Natural killer cell (primary cell): ENCODE measurements at regions of chr1 and their contacts with region 1.

Region 1: DNA sequence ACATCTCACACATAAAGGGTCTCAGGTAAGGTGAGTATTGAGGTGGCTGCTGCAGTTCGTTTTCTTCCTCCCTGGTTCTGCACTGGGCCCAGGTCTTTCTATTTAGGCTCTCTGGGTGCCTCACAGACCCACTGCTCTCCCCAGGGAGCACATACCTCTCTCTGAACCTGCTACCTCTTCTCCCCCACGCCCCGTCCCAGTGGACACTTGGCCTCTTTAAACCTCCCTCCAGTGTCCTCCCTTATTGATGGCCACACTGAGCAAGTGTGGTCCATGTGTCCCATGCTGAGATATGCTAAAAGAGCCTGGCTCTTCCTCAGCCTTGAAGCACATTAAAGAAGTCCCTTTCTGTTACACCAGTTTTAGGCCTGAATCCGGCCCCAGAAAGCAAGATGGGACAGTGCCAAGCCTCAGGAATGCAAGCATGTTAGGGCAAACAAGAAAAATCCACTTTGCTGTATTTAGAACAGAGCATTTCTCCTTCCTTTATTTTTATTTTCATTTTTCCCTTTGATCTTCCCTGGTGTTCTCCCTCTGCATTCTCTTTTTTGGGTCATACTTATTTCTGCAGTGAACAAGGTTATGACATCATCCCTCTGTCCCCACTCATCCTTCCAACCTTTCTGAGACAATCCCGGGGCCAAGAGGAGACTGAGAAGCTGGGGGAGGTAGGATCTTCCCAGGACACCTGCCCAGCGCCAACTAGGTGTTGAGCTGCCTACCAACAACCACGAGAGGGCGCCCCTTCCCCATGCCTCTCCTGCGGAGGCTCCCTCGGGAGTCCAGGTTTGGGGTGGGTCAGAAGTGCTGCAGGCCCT is 5.0 kb upstream of the CHI3L2 start:
- DNase-seq: peak; percentile 76 to 90
- ATAC-seq: peak; percentile 29 to 67 (median 60)
- H3K4me3 ChIP-seq: peak overlapping the region; percentile 0
- H3K4me3 Mint-ChIP-seq: peak overlapping the region; percentile 86
- H3K27ac ChIP-seq: peak overlapping the region; percentile 80
- H3K27ac Mint-ChIP-seq: peak overlapping the region; percentile 94 to 95
- H3K4me1 ChIP-seq: peaks cover 87% of the 10 kb centered on the region
- H3K4me1 Mint-ChIP-seq: peaks cover 90 to 93% of the 10 kb centered on the region in 2 donors
- H3K27me3 ChIP-seq: no peaks in the 10 kb centered on the region
- H3K27me3 Mint-ChIP-seq: no peaks in the 10 kb centered on the region
- CTCF ChIP-seq: peak; percentile 89

Region 2: DNA sequence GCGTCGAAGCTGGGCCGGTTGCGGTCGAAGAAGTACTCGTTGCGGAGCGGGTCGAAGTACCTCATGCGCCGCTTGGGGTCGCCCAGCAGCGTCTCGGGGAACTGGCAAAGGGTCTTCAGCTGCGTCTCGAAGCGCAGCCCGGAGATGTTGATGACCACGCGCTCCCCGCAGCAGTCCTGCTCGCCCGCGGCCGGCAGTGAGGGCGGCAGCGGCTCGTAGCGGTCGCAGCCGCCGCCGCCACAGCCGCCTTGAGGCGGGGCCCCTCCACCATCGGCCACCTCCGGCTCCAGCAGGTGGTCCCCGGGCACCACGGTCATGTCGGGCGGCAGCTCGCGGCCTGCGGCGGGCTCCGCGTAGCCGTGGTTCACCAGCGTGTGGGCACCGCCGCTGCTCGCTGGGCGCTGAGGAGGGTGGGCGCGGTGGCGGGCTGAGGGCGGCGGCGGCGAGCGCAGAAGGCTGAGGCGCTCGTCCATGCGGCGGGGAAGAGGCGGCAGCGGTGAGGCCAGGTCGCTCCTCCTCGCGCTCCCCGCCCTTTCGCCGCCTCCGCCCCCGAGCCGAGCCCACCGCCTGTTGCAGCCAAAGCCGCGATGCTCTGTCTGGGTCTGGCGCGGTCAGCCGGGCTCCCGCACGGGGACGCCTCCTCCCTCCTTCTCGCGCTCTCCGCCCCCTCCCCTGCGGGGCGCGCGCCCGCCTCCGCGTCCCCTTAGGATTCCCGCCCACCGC is 548.0 kb before region 1 on chr1 and contains the start of gene KCNA3:
- intact Hi-C with region 1: loop called (anchors 10 kb)
- DNase-seq: peak; percentile 72 to 82
- ATAC-seq: peak; percentile 59 to 74 (median 72)
- H3K4me3 ChIP-seq: peak within 1 kb of the TSS; percentile 68
- H3K4me3 Mint-ChIP-seq: peak within 1 kb of the TSS; percentile 98
- H3K27ac ChIP-seq: peak within 1 kb of the TSS; percentile 93
- H3K27ac Mint-ChIP-seq: peak within 1 kb of the TSS; percentile 88 to 98
- H3K4me1 ChIP-seq: peaks cover 26% of the 10 kb centered on the region
- H3K4me1 Mint-ChIP-seq: peaks cover 42 to 43% of the 10 kb centered on the region in 2 donors
- H3K27me3 ChIP-seq: no peaks in the 10 kb centered on the region
- H3K27me3 Mint-ChIP-seq: no peaks in the 10 kb centered on the region
- CTCF ChIP-seq: no peak
- total RNA-seq, gene KCNA3: 19.7 to 36.2 (median 30.3) TPM

Region 3: GRCh38 chr1:110879758-110880606 is 342.5 kb before region 1 on chr1:
- intact Hi-C with region 1: loop called (anchors 5 kb)
- DNase-seq: peak; percentile 42 to 78
- ATAC-seq: peak; percentile 60 to 79 (median 67)
- H3K4me3 ChIP-seq: peak overlapping the region; percentile 8
- H3K4me3 Mint-ChIP-seq: peak overlapping the region; percentile 99
- H3K27ac ChIP-seq: peak overlapping the region; percentile 86
- H3K27ac Mint-ChIP-seq: peak overlapping the region; percentile 92 to 99
- H3K4me1 ChIP-seq: peaks cover 35% of the 10 kb centered on the region
- H3K4me1 Mint-ChIP-seq: peaks cover 75 to 99% of the 10 kb centered on the region in 2 donors
- H3K27me3 ChIP-seq: no peaks in the 10 kb centered on the region
- H3K27me3 Mint-ChIP-seq: no peaks in the 10 kb centered on the region
- CTCF ChIP-seq: no peak

Region 4: DNA sequence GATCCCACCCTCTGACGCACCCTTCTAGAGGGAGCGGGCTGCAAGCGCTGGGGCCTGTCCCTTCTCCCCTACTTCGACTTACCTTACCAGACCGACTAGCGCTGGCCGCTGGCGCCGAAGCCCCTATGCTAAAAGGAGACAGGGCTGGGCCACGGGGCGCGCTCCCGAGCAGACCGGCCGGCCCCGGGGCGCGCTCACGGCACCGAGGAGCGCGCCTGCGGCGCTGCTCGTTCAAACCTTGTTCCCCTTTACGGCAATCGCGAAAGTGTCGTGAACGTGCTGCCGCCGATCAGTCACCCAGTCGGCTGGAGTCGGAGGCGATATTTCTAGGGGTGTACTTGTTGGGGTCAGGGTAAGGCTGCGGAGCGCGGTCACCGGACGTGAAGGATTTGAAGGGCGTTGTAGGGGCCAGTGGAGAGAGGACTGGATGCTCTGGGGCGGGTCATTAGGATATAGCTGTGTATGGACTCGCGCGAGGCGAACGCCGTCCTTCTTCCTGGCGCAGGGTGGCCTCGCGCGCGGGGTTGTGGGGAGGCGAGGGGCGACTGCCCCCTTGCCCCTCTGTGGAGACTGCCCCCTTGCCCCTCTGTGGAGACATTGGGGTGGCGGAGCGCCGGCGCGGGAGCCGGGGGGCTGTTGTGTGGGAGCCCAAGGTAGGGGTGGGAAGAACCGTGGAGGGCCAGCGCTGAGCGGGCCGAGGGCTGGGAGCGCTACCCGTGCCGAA is 82.4 kb before region 1 on chr1 and contains the starts of genes CEPT1 and DRAM2:
- intact Hi-C with region 1: loop called (anchors 5 kb)
- DNase-seq: peak; percentile 91 to 95
- ATAC-seq: peak; percentile 79 to 96 (median 82)
- H3K4me3 ChIP-seq: peak within 1 kb of the TSS; percentile 88
- H3K4me3 Mint-ChIP-seq: peak within 1 kb of the TSS; percentile 99
- H3K27ac ChIP-seq: peak within 1 kb of the TSS; percentile 96
- H3K27ac Mint-ChIP-seq: peak within 1 kb of the TSS; percentile 91 to 98
- H3K4me1 ChIP-seq: no peaks in the 10 kb centered on the region
- H3K4me1 Mint-ChIP-seq: peaks cover 40 to 48% of the 10 kb centered on the region in 2 donors
- H3K27me3 ChIP-seq: no peaks in the 10 kb centered on the region
- H3K27me3 Mint-ChIP-seq: no peaks in the 10 kb centered on the region
- CTCF ChIP-seq: no peak
- total RNA-seq, gene CEPT1: 35.4 to 49.5 (median 40.9) TPM
- total RNA-seq, gene DRAM2: 35.8 to 40.8 (median 36.4) TPM

Region 5: GRCh38 chr1:111275079-111275478 is 52.6 kb after region 1 on chr1:
- intact Hi-C with region 1: no loop called
- DNase-seq: peak in 1 of 2 donors; percentile 13
- ATAC-seq: peak in 1 of 3 donors; percentile 39
- H3K4me3 ChIP-seq: no peak overlapping the region
- H3K4me3 Mint-ChIP-seq: no peak overlapping the region
- H3K27ac ChIP-seq: no peak overlapping the region
- H3K27ac Mint-ChIP-seq: no peak overlapping the region
- H3K4me1 ChIP-seq: peaks cover 17% of the 10 kb centered on the region
- H3K4me1 Mint-ChIP-seq: peaks cover 17 to 21% of the 10 kb centered on the region in 2 donors
- H3K27me3 ChIP-seq: peaks cover 21% of the 10 kb centered on the region
- H3K27me3 Mint-ChIP-seq: peaks cover 44% of the 10 kb centered on the region in 2 donors
- CTCF ChIP-seq: no peak

Region 6: DNA sequence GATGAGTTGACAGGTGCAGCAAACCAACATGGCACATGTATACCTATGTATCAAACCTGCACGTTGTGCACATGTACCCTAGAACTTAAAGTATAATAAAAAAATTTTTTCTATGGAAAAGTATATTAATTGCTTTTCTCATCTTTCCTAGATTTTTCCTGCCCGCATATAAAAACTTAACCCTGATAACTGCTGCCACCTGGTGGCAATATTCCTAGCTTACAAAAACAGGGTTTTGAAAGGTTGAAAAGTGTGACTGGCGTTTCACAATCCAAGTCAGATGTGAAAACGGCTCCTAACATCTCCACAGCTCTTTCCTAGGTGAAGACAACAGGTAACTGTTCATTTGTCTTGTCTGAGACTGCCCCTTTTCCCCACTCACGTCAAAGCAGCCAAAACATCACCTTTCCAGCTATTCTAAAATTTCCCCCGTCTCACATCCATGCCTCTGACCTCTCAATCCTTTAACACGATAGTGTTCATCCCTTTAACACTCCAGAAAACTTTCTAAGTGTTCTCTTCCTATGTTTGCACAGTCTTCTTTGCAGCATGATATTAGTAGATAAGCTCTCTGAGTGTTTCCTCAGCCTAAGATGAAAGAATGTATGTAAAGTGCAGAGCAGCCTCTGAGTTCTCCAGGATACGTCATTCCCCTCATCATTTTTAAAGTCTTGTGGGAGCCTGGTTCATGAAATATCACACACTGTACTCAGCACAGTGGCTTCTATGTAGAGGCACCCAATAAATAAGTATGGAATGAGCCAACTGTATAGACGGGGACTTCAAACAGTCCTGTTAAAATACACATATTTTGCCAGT is 177.5 kb after region 1 on chr1:
- intact Hi-C with region 1: loop called (anchors 1 kb)
- DNase-seq: peak; percentile 21 to 73
- ATAC-seq: peak in 1 of 3 donors; percentile 31
- H3K4me3 ChIP-seq: no peak overlapping the region
- H3K4me3 Mint-ChIP-seq: no peak overlapping the region
- H3K27ac ChIP-seq: no peak overlapping the region
- H3K27ac Mint-ChIP-seq: no peak overlapping the region
- H3K4me1 ChIP-seq: no peaks in the 10 kb centered on the region
- H3K4me1 Mint-ChIP-seq: peaks cover 6 to 7% of the 10 kb centered on the region in 2 donors
- H3K27me3 ChIP-seq: no peaks in the 10 kb centered on the region
- H3K27me3 Mint-ChIP-seq: peaks cover 18 to 20% of the 10 kb centered on the region in 2 donors
- CTCF ChIP-seq: peak; percentile 73

Region 7: GRCh38 chr1:111481387-111482221 is 259.1 kb after region 1 on chr1:
- intact Hi-C with region 1: no loop called
- DNase-seq: peak; percentile 36 to 73
- ATAC-seq: peak; percentile 68 to 77 (median 72)
- H3K4me3 ChIP-seq: no peak overlapping the region
- H3K4me3 Mint-ChIP-seq: no peak overlapping the region
- H3K27ac ChIP-seq: no peak overlapping the region
- H3K27ac Mint-ChIP-seq: no peak overlapping the region
- H3K4me1 ChIP-seq: peaks cover 19% of the 10 kb centered on the region
- H3K4me1 Mint-ChIP-seq: peaks cover 28 to 40% of the 10 kb centered on the region in 2 donors
- H3K27me3 ChIP-seq: no peaks in the 10 kb centered on the region
- H3K27me3 Mint-ChIP-seq: no peaks in the 10 kb centered on the region
- CTCF ChIP-seq: peak; percentile 34